ENCODE measurements at regions of chr19 and their contacts with region 1.

Region 1: DNA sequence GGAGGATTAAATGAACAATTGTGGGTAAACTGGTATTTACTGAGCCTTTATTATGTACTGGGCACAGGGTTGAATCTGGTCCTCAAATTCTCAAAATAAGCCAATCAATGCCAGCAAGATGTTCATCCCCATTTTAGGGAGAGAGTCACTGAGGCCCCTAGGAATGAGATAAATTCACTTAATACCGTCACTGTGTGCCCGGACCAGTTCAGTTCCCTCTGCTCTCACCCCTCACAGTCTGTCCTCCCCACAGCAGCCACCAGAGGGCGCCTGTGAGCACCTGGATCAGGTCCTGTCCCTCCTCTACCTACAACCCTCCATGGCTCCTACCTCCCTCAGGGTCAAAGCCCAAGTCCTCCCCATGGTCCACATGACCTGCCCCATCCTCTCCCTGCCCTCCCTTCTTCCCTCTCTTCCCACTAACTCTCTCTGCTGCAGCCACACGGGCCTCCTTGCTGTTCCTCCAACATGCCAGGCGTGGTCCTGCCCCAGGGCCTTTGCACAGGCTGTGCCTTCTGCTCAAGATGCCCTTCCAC is 42.0 kb upstream of the NFIC start:
- DNase-seq: peak; percentile 51
- ATAC-seq: peak; percentile 43
- H3K4me3 ChIP-seq: no peak overlapping the region
- H3K27ac ChIP-seq: no peak overlapping the region
- H3K4me1 ChIP-seq: peaks cover 5% of the 10 kb centered on the region; the same call in 1 of the 2 replicates
- H3K27me3 ChIP-seq: no peaks in the 10 kb centered on the region
- CTCF ChIP-seq: peak; percentile 77

Region 2: GRCh38 chr19:3304871-3305423 is 19.4 kb before region 1 on chr19:
- CTCF ChIA-PET with region 1: no interaction called
- POLR2A ChIA-PET with region 1: no interaction called
- intact Hi-C with region 1: no loop called
- DNase-seq: peak; percentile 77
- ATAC-seq: no peak
- H3K4me3 ChIP-seq: no peak overlapping the region
- H3K27ac ChIP-seq: no peak overlapping the region
- H3K4me1 ChIP-seq: no peaks in the 10 kb centered on the region
- H3K27me3 ChIP-seq: no peaks in the 10 kb centered on the region
- CTCF ChIP-seq: peak; percentile 70

Region 3: GRCh38 chr19:3375221-3376090 is 51.1 kb after region 1 on chr19:
- CTCF ChIA-PET with region 1: no interaction called
- POLR2A ChIA-PET with region 1: no interaction called
- intact Hi-C with region 1: no loop called
- DNase-seq: no peak
- ATAC-seq: no peak
- H3K4me3 ChIP-seq: no peak overlapping the region
- H3K27ac ChIP-seq: no peak overlapping the region
- H3K4me1 ChIP-seq: no peaks in the 10 kb centered on the region
- H3K27me3 ChIP-seq: no peaks in the 10 kb centered on the region
- CTCF ChIP-seq: no peak

Region 4: GRCh38 chr19:3429581-3430080 is 105.2 kb after region 1 on chr19:
- CTCF ChIA-PET with region 1: interaction called, 7 read pairs
- POLR2A ChIA-PET with region 1: no interaction called
- intact Hi-C with region 1: loop called (anchors 1 kb)
- DNase-seq: peak; percentile 64
- ATAC-seq: peak; percentile 73
- H3K4me3 ChIP-seq: no peak overlapping the region
- H3K27ac ChIP-seq: no peak overlapping the region
- H3K4me1 ChIP-seq: peaks cover 4% of the 10 kb centered on the region; the same call in 1 of the 2 replicates
- H3K27me3 ChIP-seq: no peaks in the 10 kb centered on the region
- CTCF ChIP-seq: peak; percentile 71

Region 5: DNA sequence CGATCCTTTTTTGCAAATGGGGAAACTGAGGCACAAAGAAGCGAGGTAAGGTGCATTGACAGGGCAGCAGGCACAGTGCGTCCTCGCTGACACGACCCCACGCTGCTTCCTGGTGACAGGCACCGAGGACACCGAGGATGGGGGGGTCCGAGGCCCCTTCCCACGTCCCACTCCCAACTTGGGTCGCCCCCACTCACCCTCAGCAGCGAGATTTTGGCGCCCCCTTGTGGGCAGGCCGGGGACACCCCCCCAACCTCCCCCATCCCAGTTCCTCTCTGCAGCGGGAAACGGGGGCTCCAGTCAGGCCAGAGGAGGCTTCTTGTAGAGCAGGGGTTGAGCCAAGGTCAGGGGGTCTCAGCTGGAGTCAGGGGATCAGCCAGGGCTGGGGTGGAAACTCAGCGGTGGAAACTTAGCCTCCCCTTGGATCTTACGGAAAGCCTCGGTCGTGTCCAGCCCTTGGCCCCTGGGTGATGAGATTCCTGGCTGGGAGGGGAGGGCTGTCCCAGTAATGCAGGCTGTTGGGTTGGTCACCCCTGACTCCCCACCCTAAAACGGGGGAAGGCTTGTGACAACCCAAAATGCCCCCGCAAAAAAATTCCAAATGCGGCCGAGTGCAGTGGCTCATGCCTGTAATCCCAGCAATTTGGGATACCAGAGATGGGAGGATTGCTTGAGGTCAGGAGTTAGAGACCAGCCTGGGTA is 147.7 kb after region 1 on chr19:
- CTCF ChIA-PET with region 1: no interaction called
- POLR2A ChIA-PET with region 1: no interaction called
- intact Hi-C with region 1: loop called (anchors 2 kb)
- DNase-seq: peak; percentile 8
- ATAC-seq: peak; percentile 26; the same call in 1 of the 2 replicates
- H3K4me3 ChIP-seq: no peak overlapping the region
- H3K27ac ChIP-seq: no peak overlapping the region
- H3K4me1 ChIP-seq: no peaks in the 10 kb centered on the region
- H3K27me3 ChIP-seq: no peaks in the 10 kb centered on the region
- CTCF ChIP-seq: peak; percentile 81